HepG2 (cell line): ENCODE measurements at regions of chr9 and their contacts with region 1.

Region 1: DNA sequence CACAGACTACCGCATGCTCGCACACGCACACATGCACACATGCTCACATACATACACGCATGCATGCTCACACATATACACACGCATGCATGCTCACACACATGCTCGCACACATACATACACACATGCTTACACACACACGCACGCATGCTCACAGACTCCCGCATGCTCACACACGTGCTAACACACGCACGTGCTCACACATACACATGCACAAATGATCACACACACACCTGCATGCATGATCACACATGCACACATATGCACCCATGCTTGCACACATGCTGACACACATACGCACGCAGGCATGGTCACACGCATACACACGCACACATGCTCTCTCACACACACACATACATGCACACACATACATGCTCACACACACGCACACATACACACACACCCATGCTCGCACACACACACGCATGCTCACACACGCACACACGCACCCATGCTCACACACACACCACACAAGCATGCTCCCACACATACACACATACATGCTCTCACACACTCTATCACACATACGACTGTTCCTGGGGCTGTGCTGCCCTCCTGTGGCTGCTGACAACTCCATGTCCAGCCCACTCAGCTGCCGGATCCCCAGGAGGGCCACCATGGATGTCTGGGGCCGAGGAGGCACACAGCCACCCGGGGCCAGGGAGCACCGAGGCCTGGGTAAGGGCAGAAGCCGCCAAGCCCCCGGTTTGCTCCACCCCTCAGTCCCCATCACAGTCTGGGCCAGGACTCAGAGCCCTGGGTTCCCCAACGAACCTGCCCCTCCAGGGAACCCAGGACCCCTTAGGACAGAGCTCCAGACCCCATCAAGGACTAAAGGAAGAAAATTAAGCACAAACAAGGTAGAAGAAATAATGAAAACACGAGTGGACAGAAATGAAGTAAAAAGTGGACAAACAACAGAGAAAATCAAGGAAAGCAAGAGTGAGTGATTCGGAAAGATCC is 31.4 kb upstream of the EGFL7 start:
- DNase-seq: peak; percentile 65
- ATAC-seq: peak; percentile 73
- H3K4me3 ChIP-seq: no peak overlapping the region
- H3K27ac ChIP-seq: no peak overlapping the region
- H3K4me1 ChIP-seq: peaks cover 13% of the 10 kb centered on the region
- H3K27me3 ChIP-seq: peaks cover 12 to 54% of the 10 kb centered on the region in 2 experiments; a peak in 4 of 5 replicates
- CTCF ChIP-seq: peak; percentile 99
- EP300 ChIP-seq: no peak
- POLR2A ChIP-seq: no peak
- RAD21 ChIP-seq: peak; percentile 94

Region 2: DNA sequence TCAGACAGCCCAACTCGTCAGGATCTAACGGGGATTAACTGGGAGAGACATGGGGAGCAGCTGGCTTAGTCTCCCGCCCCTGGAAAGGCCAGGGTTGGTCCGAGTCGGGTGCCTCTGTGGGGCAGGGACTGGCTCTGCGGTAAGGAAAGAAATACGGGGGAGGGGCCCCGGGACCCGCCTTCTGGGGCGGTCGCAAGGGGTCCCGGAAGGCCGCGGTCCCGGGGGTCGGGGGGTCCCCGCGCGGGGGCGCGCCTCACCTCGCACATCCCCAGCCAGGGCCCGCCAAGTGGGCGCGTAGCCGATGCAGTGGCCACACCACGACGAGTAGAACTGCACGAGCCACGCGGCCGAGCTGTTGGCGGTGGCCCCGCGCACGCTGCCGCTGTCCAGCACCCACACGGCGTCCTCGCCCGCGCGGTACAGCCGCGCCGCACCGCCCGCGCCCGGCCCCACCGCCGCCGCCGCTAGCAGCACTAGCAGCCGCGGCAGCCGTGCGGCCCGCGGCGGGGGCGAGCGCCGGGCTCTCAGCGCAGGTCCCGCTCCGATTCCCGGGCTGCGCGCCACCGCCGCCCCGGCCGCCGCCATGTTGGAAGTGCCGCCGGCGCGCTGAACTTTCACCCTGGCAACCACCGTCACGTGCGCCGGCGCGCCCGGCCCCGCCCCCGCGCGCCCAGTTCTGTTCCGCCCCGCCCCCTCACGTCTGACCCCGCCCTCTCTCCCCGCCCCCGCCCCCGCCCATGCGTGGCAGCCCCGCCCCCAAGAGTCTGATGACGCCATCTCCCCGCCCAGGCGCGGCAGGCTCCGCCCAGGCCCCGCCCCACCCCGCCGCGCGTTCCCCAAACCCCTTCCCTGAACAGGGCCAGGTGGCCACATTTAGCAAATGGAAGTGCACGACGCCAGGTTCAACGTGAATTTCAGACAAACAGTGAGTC is 385.8 kb before region 1 on chr9 and contains the start of gene QSOX2:
- CTCF ChIA-PET with region 1: no interaction called
- POLR2A ChIA-PET with region 1: no interaction called
- in situ Hi-C with region 1: no loop called
- intact Hi-C with region 1: loop called (anchors 5 kb)
- DNase-seq: peak; percentile 46
- ATAC-seq: peak; percentile 62
- H3K4me3 ChIP-seq: peak within 1 kb of the TSS; percentile 63 to 91 (median 88)
- H3K27ac ChIP-seq: peak within 1 kb of the TSS; percentile 70
- H3K4me1 ChIP-seq: peaks cover 56% of the 10 kb centered on the region
- H3K27me3 ChIP-seq: peaks cover 16 to 45% of the 10 kb centered on the region in 2 experiments
- CTCF ChIP-seq: no peak
- EP300 ChIP-seq: no peak
- POLR2A ChIP-seq: peak in 1 of 2 experiments; percentile 71; a peak in 2 of 4 replicates
- RAD21 ChIP-seq: peak; percentile 37; the same call in 1 of the 2 replicates
- total RNA-seq, gene QSOX2: 10.1 and 27.1 TPM in 2 replicates

Region 3: GRCh38 chr9:136339173-136339957 is 292.0 kb before region 1 on chr9:
- CTCF ChIA-PET with region 1: no interaction called
- POLR2A ChIA-PET with region 1: no interaction called
- in situ Hi-C with region 1: loop called (anchors 25 kb)
- intact Hi-C with region 1: no loop called
- DNase-seq: peak; percentile 62
- ATAC-seq: peak; percentile 78
- H3K4me3 ChIP-seq: no peak overlapping the region; a peak in 1 of 6 replicates
- H3K27ac ChIP-seq: no peak overlapping the region
- H3K4me1 ChIP-seq: peaks cover 42% of the 10 kb centered on the region
- H3K27me3 ChIP-seq: peaks cover 4 to 20% of the 10 kb centered on the region in 2 experiments; a peak in 3 of 5 replicates
- CTCF ChIP-seq: peak; percentile 95
- EP300 ChIP-seq: no peak; a peak in 1 of 4 replicates
- POLR2A ChIP-seq: no peak
- RAD21 ChIP-seq: peak; percentile 90

Region 4: DNA sequence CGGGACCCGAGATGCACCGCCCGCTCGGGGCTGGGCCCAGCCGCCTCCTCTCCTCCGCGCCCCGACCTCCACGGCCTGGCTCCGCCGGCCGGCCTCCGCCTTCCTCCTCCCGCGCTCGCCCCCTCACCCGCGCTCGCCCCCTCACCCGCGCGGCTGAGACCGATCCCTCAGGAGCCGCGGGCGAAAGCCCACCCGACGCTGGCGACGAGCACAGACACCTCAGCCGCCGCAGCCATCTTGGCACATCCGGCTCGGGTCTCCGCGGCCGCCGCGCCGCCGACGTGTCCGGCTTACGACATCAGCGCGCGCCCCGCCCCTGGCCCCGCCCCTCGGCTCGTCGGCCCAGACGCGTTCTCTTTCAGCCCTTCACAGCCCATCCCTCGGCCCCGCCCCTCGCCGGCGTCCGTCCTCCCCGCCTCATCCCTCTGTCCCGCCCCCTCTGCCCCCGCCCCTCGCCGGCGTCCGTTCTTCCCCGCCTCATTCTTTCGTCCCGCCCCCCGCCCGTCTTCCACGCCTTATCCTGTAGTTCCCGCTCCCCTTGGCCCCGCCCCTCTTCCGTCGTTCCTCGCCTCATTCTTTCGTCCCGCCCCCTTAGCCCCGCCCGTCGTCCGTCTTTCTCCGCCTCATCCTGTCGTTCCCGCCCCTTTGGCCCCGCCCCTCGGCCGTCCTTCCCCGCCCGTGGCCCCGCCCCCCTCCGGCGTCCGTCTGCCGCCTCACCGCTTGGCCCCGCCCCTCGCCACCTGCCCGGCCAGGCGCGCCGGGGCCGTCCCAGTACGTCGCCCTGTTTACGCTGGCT is 148.3 kb before region 1 on chr9 and contains the start of gene SEC16A:
- CTCF ChIA-PET with region 1: interaction called, 101 read pairs
- POLR2A ChIA-PET with region 1: interaction called, 25 read pairs
- in situ Hi-C with region 1: no loop called
- intact Hi-C with region 1: loop called (anchors 1 kb)
- DNase-seq: peak; percentile 89
- ATAC-seq: peak; percentile 43
- H3K4me3 ChIP-seq: peak within 1 kb of the TSS; percentile 79 to 98 (median 87)
- H3K27ac ChIP-seq: peak within 1 kb of the TSS; percentile 100
- H3K4me1 ChIP-seq: peaks cover 42% of the 10 kb centered on the region
- H3K27me3 ChIP-seq: peaks cover 14 to 21% of the 10 kb centered on the region in 2 experiments; a peak in 3 of 5 replicates
- CTCF ChIP-seq: no peak
- EP300 ChIP-seq: 0 out of 4 replicates have a peak, but pooled peaks of 1 of the 2 experiments have one; percentile 15
- POLR2A ChIP-seq: peak in 1 of 2 experiments; percentile 82; a peak in 2 of 4 replicates
- RAD21 ChIP-seq: peak; percentile 65
- total RNA-seq, gene SEC16A: 15.9 and 27.7 TPM in 2 replicates

Region 5: DNA sequence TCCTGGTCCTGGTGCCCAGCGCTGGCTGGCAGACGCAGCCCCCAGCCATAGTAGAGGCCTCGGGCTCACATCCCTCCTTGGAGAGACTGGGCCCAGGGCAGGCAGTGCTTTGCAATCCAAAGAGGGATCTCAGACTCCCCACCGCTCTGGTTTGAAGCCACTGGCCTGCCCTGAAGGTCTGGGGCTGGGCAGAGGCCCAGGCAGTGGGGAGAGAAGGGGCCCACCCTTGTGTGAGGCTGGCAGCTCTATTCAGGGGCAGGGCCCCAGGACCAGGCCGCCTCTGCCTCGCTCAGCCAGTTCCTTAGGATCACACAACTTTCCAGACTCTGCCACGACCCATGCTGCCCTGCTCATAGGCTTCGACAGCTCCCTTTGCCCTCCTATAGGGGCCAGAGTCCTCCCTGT is 137.8 kb before region 1 on chr9:
- CTCF ChIA-PET with region 1: interaction called, 101 read pairs
- POLR2A ChIA-PET with region 1: no interaction called
- in situ Hi-C with region 1: loop called (anchors 5 kb)
- intact Hi-C with region 1: no loop called
- DNase-seq: no peak
- ATAC-seq: peak; percentile 19; the same call in 1 of the 3 replicates
- H3K4me3 ChIP-seq: no peak overlapping the region
- H3K27ac ChIP-seq: no peak overlapping the region
- H3K4me1 ChIP-seq: no peaks in the 10 kb centered on the region
- H3K27me3 ChIP-seq: peaks cover 4 to 27% of the 10 kb centered on the region in 2 experiments; a peak in 3 of 5 replicates
- CTCF ChIP-seq: no peak
- EP300 ChIP-seq: no peak
- POLR2A ChIP-seq: no peak
- RAD21 ChIP-seq: no peak

Region 6: GRCh38 chr9:136572003-136572827 is 59.1 kb before region 1 on chr9:
- CTCF ChIA-PET with region 1: no interaction called
- POLR2A ChIA-PET with region 1: no interaction called
- in situ Hi-C with region 1: no loop called
- intact Hi-C with region 1: no loop called
- DNase-seq: peak; percentile 75
- ATAC-seq: peak; percentile 34
- H3K4me3 ChIP-seq: no peak overlapping the region
- H3K27ac ChIP-seq: no peak overlapping the region
- H3K4me1 ChIP-seq: peaks cover 50% of the 10 kb centered on the region
- H3K27me3 ChIP-seq: peaks cover 16 to 72% of the 10 kb centered on the region in 2 experiments
- CTCF ChIP-seq: no peak
- EP300 ChIP-seq: no peak
- POLR2A ChIP-seq: no peak
- RAD21 ChIP-seq: no peak

Region 7: GRCh38 chr9:136590821-136591752 is 40.2 kb before region 1 on chr9:
- CTCF ChIA-PET with region 1: no interaction called
- POLR2A ChIA-PET with region 1: no interaction called
- in situ Hi-C with region 1: no loop called
- intact Hi-C with region 1: no loop called
- DNase-seq: no peak
- ATAC-seq: no peak
- H3K4me3 ChIP-seq: no peak overlapping the region
- H3K27ac ChIP-seq: no peak overlapping the region
- H3K4me1 ChIP-seq: no peaks in the 10 kb centered on the region
- H3K27me3 ChIP-seq: peaks cover 41 to 94% of the 10 kb centered on the region in 2 experiments
- CTCF ChIP-seq: no peak
- EP300 ChIP-seq: no peak
- POLR2A ChIP-seq: no peak
- RAD21 ChIP-seq: no peak